Esophagus muscularis mucosa (tissue), 4 donors: ENCODE measurements at regions of chr1 and their contacts with region 1.

Region 1: GRCh38 chr1:228275739-228276421 is 68.0 kb downstream of the OBSCN start:
- DNase-seq: peak; percentile 97
- H3K4me3 ChIP-seq: peak overlapping the region; percentile 60 to 86 (median 68)
- H3K27ac ChIP-seq: peak overlapping the region; percentile 76 to 84 (median 80)
- H3K4me1 ChIP-seq: peaks cover 9 to 32% (median 21%) of the 10 kb centered on the region in 4 donors
- H3K27me3 ChIP-seq: no peaks in the 10 kb centered on the region
- CTCF ChIP-seq: no peak
- EP300 ChIP-seq: no peak
- POLR2A ChIP-seq: no peak

Region 2: DNA sequence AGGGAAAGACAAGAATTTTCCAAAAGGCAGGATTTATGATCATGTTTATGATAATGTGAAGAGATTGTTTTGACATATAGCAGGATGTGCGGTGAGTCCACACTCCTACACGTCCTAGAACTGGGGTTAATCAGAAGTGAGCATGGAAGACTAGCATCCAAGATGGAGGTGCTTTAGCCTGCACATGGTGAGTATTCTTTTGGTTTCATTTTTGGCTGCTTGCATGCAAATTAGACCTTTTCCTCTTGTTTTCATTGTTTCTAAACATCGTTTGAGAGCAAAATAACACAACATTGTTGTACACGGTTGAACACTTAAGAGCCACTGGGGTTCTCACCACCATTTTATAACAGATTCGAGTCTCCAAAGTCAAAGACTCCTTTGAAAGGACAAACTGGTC is 150.7 kb before region 1 on chr1:
- intact Hi-C with region 1: loop called (anchors 5 kb)
- DNase-seq: no peak
- H3K4me3 ChIP-seq: no peak overlapping the region
- H3K27ac ChIP-seq: no peak overlapping the region
- H3K4me1 ChIP-seq: no peaks in the 10 kb centered on the region
- H3K27me3 ChIP-seq: peaks cover 0 to 35% (median 1%) of the 10 kb centered on the region in 4 donors
- CTCF ChIP-seq: no peak
- EP300 ChIP-seq: no peak
- POLR2A ChIP-seq: no peak

Region 3: GRCh38 chr1:228471762-228472398 is 196.0 kb after region 1 on chr1:
- intact Hi-C with region 1: no loop called
- DNase-seq: no peak
- H3K4me3 ChIP-seq: no peak overlapping the region
- H3K27ac ChIP-seq: no peak overlapping the region
- H3K4me1 ChIP-seq: no peaks in the 10 kb centered on the region
- H3K27me3 ChIP-seq: peaks cover 0 to 92% (median 20%) of the 10 kb centered on the region in 4 donors
- CTCF ChIP-seq: peak in 2 of 3 experiments; percentile 19 to 35
- EP300 ChIP-seq: no peak
- POLR2A ChIP-seq: no peak